BJ (cell line): ENCODE measurements at regions of chr7 and their contacts with region 1.

Region 1: GRCh38 chr7:42745357-42746059 is 166.4 kb downstream of the C7orf25 start:
- DNase-seq: no peak
- H3K4me3 ChIP-seq: no peak overlapping the region
- H3K27me3 ChIP-seq: no peaks in the 10 kb centered on the region
- CTCF ChIP-seq: peak; percentile 63

Region 2: DNA sequence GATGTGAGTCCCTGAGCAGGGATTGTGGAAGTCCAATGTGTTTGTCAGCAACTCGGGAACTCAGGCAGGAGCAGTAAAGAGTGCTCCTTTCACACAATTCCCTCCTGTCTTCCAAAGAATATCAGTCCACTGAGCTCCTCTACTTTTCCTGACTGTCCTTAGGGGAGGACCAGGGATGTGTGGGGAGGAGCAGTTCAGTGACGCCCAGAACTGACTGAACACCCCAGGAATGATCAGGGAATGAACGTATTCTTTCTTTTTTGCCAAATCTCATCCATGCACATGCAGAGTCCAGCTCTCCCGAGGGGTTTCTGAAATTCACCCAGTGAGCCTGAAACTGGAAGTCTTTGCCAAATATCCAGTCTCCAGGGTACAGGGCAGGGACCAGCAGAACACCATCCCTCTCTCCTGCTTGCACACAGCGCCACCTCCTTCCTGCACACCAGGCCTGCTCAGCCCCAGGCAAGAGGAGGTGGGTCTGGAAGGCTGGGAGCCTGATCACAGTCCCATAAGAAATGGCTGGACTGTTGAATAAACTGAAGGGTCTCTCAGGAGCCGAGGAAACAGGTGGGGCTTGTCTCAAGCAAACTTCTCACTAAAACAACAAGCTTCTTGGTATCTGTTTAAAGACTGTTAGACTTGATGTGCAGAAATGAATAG is 128.3 kb before region 1 on chr7:
- CTCF ChIA-PET with region 1: no interaction called
- POLR2A ChIA-PET with region 1: no interaction called
- DNase-seq: no peak
- H3K4me3 ChIP-seq: no peak overlapping the region
- H3K27me3 ChIP-seq: no peaks in the 10 kb centered on the region
- CTCF ChIP-seq: no peak

Region 3: GRCh38 chr7:42661312-42661711 is 84.2 kb before region 1 on chr7:
- CTCF ChIA-PET with region 1: no interaction called
- POLR2A ChIA-PET with region 1: no interaction called
- DNase-seq: no peak
- H3K4me3 ChIP-seq: no peak overlapping the region
- H3K27me3 ChIP-seq: no peaks in the 10 kb centered on the region
- CTCF ChIP-seq: no peak

Region 4: DNA sequence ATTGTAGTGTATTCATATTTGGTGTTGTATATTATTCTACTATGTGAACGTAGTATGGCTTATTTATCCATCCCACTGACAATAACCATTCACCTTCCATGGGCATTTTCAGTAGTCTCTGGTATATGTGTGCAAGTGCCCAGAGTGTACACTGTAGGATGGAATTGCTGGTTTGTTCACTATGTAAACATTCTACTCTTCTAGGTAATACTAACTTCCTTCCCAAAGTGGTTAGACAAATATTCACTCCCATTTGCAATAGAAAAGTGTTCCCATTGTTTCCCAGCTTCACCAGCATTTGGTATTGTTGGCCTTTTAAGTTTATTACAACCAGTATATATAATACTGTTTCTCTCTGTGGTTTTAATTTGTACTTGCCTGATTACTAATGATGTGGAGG is 12.6 kb after region 1 on chr7:
- CTCF ChIA-PET with region 1: interaction called, 10 read pairs
- POLR2A ChIA-PET with region 1: no interaction called
- DNase-seq: no peak
- H3K4me3 ChIP-seq: no peak overlapping the region
- H3K27me3 ChIP-seq: 0 out of 2 replicates have a peak, but pooled peaks cover 1% of the 10 kb centered on the region
- CTCF ChIP-seq: no peak